HepG2 (cell line): ENCODE measurements at regions of chr10 and their contacts with region 1.

Region 1: GRCh38 chr10:100743626-100744135 is 1.7 kb upstream of the PAX2 start:
- DNase-seq: peak; percentile 47
- ATAC-seq: peak; percentile 20; the same call in 2 of the 3 replicates
- H3K4me3 ChIP-seq: no peak overlapping the region
- H3K27ac ChIP-seq: no peak overlapping the region
- H3K4me1 ChIP-seq: peaks cover 21% of the 10 kb centered on the region
- H3K27me3 ChIP-seq: peaks cover 37 to 93% of the 10 kb centered on the region in 2 experiments
- CTCF ChIP-seq: peak; percentile 85
- EP300 ChIP-seq: no peak
- POLR2A ChIP-seq: no peak
- RAD21 ChIP-seq: peak; percentile 59; the same call in 1 of the 2 replicates

Region 2: GRCh38 chr10:100562008-100562711 is 181.5 kb before region 1 on chr10:
- CTCF ChIA-PET with region 1: interaction called, 5 read pairs
- POLR2A ChIA-PET with region 1: no interaction called
- in situ Hi-C with region 1: loop called (anchors 5 kb)
- intact Hi-C with region 1: loop called (anchors 5 kb)
- DNase-seq: peak; percentile 32
- ATAC-seq: peak; percentile 74
- H3K4me3 ChIP-seq: no peak overlapping the region
- H3K27ac ChIP-seq: no peak overlapping the region
- H3K4me1 ChIP-seq: peaks cover 10% of the 10 kb centered on the region
- H3K27me3 ChIP-seq: peaks cover 2% of the 10 kb centered on the region in 2 experiments; a peak in 2 of 5 replicates
- CTCF ChIP-seq: peak; percentile 98
- EP300 ChIP-seq: no peak
- POLR2A ChIP-seq: no peak
- RAD21 ChIP-seq: peak; percentile 94

Region 3: DNA sequence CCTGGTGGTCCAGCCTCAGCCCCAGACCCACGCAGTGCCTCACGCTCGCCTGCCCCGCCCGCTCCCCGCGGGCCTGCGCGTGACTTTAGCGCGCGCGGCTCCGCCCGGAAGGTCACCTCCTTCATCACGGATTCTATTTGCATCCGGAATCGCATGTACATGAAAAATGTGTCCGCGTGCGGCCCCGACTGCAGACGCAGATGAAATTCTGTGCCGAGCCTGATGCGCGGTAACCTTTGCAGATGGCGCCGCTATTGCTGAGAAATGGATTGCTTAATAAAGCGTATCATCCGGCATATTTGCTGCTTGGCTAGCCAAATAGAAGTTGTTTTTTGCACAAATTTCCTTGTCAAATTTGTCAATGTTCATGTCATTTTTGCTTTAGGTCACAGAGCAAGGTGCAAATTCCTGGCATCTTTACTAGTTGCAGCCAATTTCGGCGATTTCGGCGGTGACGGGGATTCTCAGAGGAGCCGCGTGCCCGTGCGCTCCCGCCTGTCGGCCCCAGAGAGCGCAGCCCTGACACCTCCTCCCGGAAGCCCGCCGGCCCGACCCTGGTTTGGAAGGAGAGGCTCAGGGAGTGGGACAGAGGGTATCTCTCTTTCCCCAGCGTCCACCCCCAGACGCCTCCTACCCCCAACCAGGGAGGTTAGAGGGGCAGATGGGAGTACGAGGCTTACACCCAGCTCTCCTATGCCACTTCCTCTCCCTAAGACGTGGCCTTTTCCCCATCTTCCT is 84.2 kb before region 1 on chr10:
- CTCF ChIA-PET with region 1: no interaction called
- POLR2A ChIA-PET with region 1: no interaction called
- in situ Hi-C with region 1: no loop called
- intact Hi-C with region 1: no loop called
- DNase-seq: no peak
- ATAC-seq: no peak
- H3K4me3 ChIP-seq: no peak overlapping the region
- H3K27ac ChIP-seq: no peak overlapping the region
- H3K4me1 ChIP-seq: peaks cover 16% of the 10 kb centered on the region; the same call in 1 of the 2 replicates
- H3K27me3 ChIP-seq: peaks cover 6 to 65% of the 10 kb centered on the region in 2 experiments
- CTCF ChIP-seq: no peak
- EP300 ChIP-seq: no peak
- POLR2A ChIP-seq: no peak
- RAD21 ChIP-seq: no peak

Region 4: DNA sequence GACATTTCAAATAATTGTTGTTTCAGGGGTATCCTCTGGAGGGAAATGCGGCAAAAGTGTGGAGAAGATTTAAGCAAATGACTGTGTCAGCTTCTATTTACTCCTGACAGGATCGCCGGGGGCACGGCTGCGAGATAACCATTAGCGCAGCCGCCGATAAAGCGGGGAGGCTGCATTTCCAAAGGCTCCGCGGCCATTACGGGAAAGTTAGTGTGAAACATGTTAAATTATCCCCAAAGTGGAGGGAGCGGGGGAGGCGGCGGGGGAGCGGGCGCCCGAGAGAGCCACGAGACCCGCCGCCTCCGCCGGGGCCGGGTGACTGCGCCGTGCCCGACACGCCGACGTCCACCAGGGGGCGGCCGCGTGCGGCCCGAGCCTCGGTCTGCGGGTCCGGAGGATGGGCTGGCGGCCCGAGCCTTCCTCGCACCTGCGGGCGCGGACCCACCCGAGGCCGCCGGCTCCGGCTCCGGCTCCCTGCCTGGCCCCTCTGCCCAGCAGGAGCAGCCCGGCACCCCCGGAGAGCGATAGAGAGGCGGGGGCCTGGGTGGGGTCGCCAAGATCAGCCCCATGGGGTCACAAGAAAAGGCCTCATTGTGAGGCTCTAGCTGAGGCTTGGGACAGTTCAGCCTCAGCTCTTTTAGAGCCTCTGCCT is 72.7 kb before region 1 on chr10:
- CTCF ChIA-PET with region 1: no interaction called
- POLR2A ChIA-PET with region 1: no interaction called
- in situ Hi-C with region 1: loop called (anchors 5 kb)
- intact Hi-C with region 1: loop called (anchors 1 kb)
- DNase-seq: no peak
- ATAC-seq: peak; percentile 87
- H3K4me3 ChIP-seq: peak overlapping the region in 2 of 3 experiments; percentile 16 to 35; a peak in 3 of 6 replicates
- H3K27ac ChIP-seq: no peak overlapping the region
- H3K4me1 ChIP-seq: no peaks in the 10 kb centered on the region
- H3K27me3 ChIP-seq: peaks cover 8 to 30% of the 10 kb centered on the region in 2 experiments
- CTCF ChIP-seq: peak; percentile 61
- EP300 ChIP-seq: no peak
- POLR2A ChIP-seq: no peak
- RAD21 ChIP-seq: peak; percentile 87

Region 5: GRCh38 chr10:100683545-100684300 is 60.0 kb before region 1 on chr10:
- CTCF ChIA-PET with region 1: no interaction called
- POLR2A ChIA-PET with region 1: no interaction called
- in situ Hi-C with region 1: no loop called
- intact Hi-C with region 1: no loop called
- DNase-seq: no peak
- ATAC-seq: no peak
- H3K4me3 ChIP-seq: no peak overlapping the region
- H3K27ac ChIP-seq: no peak overlapping the region
- H3K4me1 ChIP-seq: no peaks in the 10 kb centered on the region
- H3K27me3 ChIP-seq: peaks cover 3 to 53% of the 10 kb centered on the region in 2 experiments; a peak in 4 of 5 replicates
- CTCF ChIP-seq: no peak
- EP300 ChIP-seq: no peak
- POLR2A ChIP-seq: no peak
- RAD21 ChIP-seq: no peak

Region 6: GRCh38 chr10:100730725-100731406 is 12.8 kb before region 1 on chr10:
- CTCF ChIA-PET with region 1: no interaction called
- POLR2A ChIA-PET with region 1: no interaction called
- in situ Hi-C with region 1: no loop called
- intact Hi-C with region 1: loop called (anchors 1 kb)
- DNase-seq: peak; percentile 5
- ATAC-seq: peak; percentile 20
- H3K4me3 ChIP-seq: peak overlapping the region; percentile 22 to 57 (median 26); a peak in 4 of 6 replicates
- H3K27ac ChIP-seq: no peak overlapping the region
- H3K4me1 ChIP-seq: peaks cover 32% of the 10 kb centered on the region
- H3K27me3 ChIP-seq: peaks cover 7 to 89% of the 10 kb centered on the region in 2 experiments; a peak in 4 of 5 replicates
- CTCF ChIP-seq: no peak
- EP300 ChIP-seq: no peak
- POLR2A ChIP-seq: no peak
- RAD21 ChIP-seq: no peak